ENCODE measurements at regions of chr17 and their contacts with region 1.

Region 1: DNA sequence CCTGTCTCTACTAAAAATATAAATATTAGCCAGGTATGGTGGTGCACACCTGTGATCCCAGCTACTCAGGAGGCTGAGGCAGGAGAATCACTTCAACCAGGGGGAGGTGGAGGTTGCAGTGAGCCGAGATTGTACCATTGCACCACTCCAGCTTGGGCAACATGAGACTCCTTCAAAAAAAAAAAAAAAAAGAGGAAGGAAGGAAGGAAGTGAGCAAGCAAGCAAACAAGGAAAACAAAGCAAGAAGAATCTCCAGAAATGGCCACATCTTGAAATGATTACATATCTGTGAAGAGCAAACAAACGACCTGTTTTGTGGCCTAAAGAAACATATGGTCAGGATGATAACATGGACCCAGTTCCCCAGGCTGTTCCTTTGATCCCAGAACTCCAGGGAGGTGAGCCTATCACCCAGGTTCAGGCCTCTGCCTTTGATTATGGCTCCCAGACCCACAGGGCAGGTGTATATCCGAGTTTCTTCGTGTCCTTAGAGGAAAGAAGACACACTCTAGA is 8.9 kb downstream of the ACOX1 start:
- DNase-seq: no peak
- H3K4me3 ChIP-seq: no peak overlapping the region
- H3K4me3 Mint-ChIP-seq: peak overlapping the region in 1 of 7 donors; percentile 42
- H3K27ac ChIP-seq: no peak overlapping the region
- H3K27ac Mint-ChIP-seq: peak overlapping the region in 2 of 8 donors; percentile 39 to 78
- H3K4me1 ChIP-seq: no peaks in the 10 kb centered on the region
- H3K4me1 Mint-ChIP-seq: peaks cover 17 to 38% (median 38%) of the 10 kb centered on the region in 3 donors
- H3K27me3 ChIP-seq: no peaks in the 10 kb centered on the region
- H3K27me3 Mint-ChIP-seq: no peaks in the 10 kb centered on the region

Region 2: DNA sequence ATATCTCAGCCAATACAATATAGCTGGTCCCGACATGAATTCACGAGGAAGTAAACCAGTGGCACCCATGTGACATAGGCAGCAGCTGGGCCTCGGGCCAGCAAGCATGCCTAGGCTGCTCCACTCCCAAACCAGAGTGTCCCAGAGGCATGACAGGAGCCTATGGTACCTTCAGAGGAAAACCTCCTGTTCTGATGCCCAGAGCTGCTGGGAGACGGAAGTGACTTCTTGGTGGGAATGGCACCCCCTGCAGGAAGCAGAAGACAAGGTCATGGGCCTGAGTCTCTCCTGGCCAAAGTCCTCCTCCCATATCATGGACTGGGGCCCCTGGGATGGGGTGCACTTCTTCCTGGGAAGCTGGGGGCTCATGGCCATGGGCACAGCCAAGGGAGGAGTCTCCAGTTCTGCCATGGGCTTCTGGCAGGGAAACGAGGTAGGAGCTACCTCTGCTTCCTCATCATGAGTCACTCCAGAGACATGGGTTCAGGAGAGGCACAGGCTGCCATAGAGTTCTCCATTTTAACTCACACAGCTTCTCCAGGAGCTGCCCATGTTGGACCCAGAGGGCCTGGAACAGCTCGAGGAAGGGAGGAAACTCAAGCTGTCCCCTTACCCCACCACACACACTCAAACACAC is 42.7 kb before region 1 on chr17:
- CTCF ChIA-PET with region 1: no interaction called
- POLR2A ChIA-PET with region 1: no interaction called
- DNase-seq: no peak
- H3K4me3 ChIP-seq: no peak overlapping the region
- H3K4me3 Mint-ChIP-seq: no peak overlapping the region
- H3K27ac ChIP-seq: no peak overlapping the region
- H3K27ac Mint-ChIP-seq: no peak overlapping the region
- H3K4me1 ChIP-seq: no peaks in the 10 kb centered on the region
- H3K4me1 Mint-ChIP-seq: no peaks in the 10 kb centered on the region
- H3K27me3 ChIP-seq: no peaks in the 10 kb centered on the region
- H3K27me3 Mint-ChIP-seq: peaks cover 0 to 1% of the 10 kb centered on the region in 2 donors

Region 3: GRCh38 chr17:76036497-76037261 is 66.6 kb after region 1 on chr17:
- CTCF ChIA-PET with region 1: no interaction called
- POLR2A ChIA-PET with region 1: interaction called, 11 read pairs
- DNase-seq: no peak
- H3K4me3 ChIP-seq: no peak overlapping the region
- H3K4me3 Mint-ChIP-seq: no peak overlapping the region
- H3K27ac ChIP-seq: no peak overlapping the region
- H3K27ac Mint-ChIP-seq: peak overlapping the region in 4 of 8 donors; percentile 37 to 54 (median 44)
- H3K4me1 ChIP-seq: no peaks in the 10 kb centered on the region
- H3K4me1 Mint-ChIP-seq: peaks cover 0 to 7% (median 3%) of the 10 kb centered on the region in 3 donors
- H3K27me3 ChIP-seq: no peaks in the 10 kb centered on the region
- H3K27me3 Mint-ChIP-seq: peaks cover 0 to 1% of the 10 kb centered on the region in 2 donors

Measured in CD8-positive, alpha-beta memory T cell (primary cell).